MCF 10A (cell line): ENCODE measurements at regions of chr17 and their contacts with region 1.

Region 1: GRCh38 chr17:7844292-7845154 is 10.3 kb upstream of the TMEM88 start:
- DNase-seq: peak; percentile 96
- H3K4me3 Mint-ChIP-seq: peak overlapping the region; percentile 79
- H3K27ac Mint-ChIP-seq: peak overlapping the region; percentile 87
- H3K4me1 Mint-ChIP-seq: peaks cover 27% of the 10 kb centered on the region
- H3K27me3 Mint-ChIP-seq: no peaks in the 10 kb centered on the region
- CTCF ChIP-seq: no peak

Region 2: DNA sequence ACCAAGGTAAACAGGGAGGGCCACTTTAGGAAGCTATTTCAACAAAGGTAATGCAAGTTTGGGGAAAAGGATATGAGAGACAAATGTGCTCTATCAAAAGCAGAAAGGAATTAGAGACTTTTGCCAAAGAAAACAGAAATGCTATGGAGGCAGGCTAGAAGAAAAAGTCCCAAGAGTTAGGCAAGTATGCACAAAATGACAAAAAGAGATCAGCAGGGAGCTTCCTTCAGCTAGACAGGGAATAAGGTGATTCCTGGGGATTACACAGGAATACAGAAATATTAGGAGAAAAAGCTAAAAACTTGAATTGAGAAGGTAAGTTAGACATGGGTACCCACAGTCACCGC is 232.3 kb before region 1 on chr17:
- CTCF ChIA-PET with region 1: no interaction called
- POLR2A ChIA-PET with region 1: no interaction called
- intact Hi-C with region 1: no loop called
- DNase-seq: no peak
- H3K4me3 Mint-ChIP-seq: peak overlapping the region; percentile 80
- H3K27ac Mint-ChIP-seq: peak overlapping the region; percentile 43
- H3K4me1 Mint-ChIP-seq: peaks cover 32% of the 10 kb centered on the region
- H3K27me3 Mint-ChIP-seq: no peaks in the 10 kb centered on the region
- CTCF ChIP-seq: no peak

Region 3: DNA sequence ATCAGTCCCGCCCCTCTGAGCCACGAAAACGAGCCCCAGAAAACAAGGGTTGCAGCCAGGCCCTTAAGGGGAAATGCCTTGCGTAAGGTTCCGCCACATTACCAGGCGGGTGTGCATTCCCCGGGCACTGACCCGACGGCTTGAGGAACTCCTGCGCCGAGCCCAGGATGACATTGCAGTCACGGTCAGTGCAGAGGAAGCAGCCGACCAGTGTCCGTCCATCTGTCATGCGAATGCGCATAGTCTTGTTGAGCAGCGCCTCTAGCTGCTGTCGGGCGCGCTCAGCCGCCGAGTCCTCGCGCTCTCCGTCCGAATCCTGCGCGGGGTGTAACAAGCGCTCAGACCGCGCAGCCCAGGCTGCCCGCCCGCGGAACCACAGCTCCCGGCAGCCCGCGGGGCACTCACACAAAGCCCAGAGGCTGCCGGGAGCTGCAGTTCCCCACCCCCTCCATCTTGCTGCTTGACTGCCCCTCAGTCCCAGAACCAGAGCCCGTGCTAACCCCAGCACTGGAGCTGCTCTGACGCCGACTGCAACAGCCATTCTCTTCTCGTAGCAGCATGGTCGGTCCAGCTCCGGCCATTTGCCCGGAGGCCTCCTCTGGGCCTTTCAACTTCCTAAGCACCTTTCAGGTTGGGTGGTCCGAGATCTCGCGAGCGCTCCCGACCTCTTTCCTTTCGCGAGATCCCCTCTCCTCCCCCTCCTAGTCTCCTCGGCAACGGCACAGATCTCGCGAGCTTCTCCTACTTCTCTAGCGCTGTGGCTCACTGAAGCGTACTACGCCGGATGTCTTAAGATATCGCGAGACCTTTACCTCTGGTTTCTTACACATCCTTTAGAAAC is 12.6 kb after region 1 on chr17 and contains the start of gene NAA38:
- CTCF ChIA-PET with region 1: interaction called, 4 read pairs
- POLR2A ChIA-PET with region 1: interaction called, 65 read pairs
- intact Hi-C with region 1: no loop called
- DNase-seq: peak; percentile 99
- H3K4me3 Mint-ChIP-seq: no peak within 1 kb of the TSS
- H3K27ac Mint-ChIP-seq: no peak within 1 kb of the TSS
- H3K4me1 Mint-ChIP-seq: peaks cover 7% of the 10 kb centered on the region
- H3K27me3 Mint-ChIP-seq: no peaks in the 10 kb centered on the region
- CTCF ChIP-seq: peak; percentile 22
- total RNA-seq, gene NAA38: 70.2 and 83.4 TPM in 2 replicates